K562 (cell line): ENCODE measurements at regions of chr7 and their contacts with region 1.

Region 1: DNA sequence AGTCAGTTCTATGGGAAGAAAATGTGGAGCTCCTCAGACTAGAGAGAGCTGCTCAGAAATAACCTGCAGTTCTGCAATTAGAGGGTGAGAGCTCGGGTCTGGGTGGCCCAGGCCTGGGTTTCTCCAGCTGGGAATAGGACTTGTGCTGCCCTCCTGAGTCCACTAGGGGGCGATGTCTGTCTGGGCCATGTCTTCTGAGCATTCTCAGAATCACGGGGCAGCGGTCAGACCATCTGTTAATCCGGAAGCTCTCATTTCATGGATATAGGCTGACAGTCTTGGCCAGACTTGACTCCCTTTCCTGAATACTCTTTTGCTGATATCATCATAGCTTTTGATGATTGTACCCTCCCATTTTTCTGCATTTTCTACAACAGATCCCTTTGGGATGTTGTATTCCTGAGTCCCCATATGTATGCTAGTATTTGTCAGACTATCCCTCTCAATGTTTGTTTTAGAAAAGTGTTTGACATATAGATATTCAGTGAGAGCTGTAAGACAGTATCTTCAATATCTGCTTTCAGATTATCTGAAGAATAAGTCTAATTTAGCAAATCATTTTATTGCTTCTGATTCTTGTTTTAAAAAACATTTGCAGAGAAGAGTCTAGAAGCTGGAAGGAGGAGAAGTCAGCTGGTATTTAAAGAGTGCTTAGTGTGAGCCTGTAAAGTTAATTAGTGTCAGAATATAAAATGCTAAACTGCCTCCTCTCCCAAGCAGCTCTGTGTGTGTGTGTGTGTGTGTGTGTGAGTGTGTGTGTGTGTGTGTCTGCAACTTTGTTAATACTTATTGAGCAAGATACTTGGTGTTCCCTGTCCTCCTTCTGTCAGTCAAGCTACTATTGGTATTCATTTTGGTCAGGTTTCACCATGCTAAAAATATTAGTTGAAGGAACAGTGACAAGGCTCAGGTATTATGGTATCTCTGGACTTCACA is 38.0 kb downstream of the STARD3NL start:
- DNase-seq: peak; percentile 81 to 86 (median 83)
- ATAC-seq: peak; percentile 99
- H3K4me3 ChIP-seq: no peak overlapping the region
- H3K27ac ChIP-seq: no peak overlapping the region
- H3K4me1 ChIP-seq: no peaks in the 10 kb centered on the region
- H3K27me3 ChIP-seq: no peaks in the 10 kb centered on the region
- CTCF ChIP-seq: peak; percentile 94 to 96 (median 96)
- EP300 ChIP-seq: no peak
- POLR2A ChIP-seq: no peak
- RAD21 ChIP-seq: peak; percentile 90 to 91

Region 2: GRCh38 chr7:37759526-37759925 is 456.5 kb before region 1 on chr7:
- CTCF ChIA-PET with region 1: no interaction called
- POLR2A ChIA-PET with region 1: no interaction called
- in situ Hi-C with region 1: no loop called
- intact Hi-C with region 1: no loop called
- DNase-seq: no peak
- ATAC-seq: no peak
- H3K4me3 ChIP-seq: no peak overlapping the region
- H3K27ac ChIP-seq: no peak overlapping the region
- H3K4me1 ChIP-seq: no peaks in the 10 kb centered on the region; a peak in 1 of 5 replicates
- H3K27me3 ChIP-seq: no peaks in the 10 kb centered on the region
- CTCF ChIP-seq: no peak
- EP300 ChIP-seq: no peak
- POLR2A ChIP-seq: no peak
- RAD21 ChIP-seq: no peak

Region 3: GRCh38 chr7:37796138-37796775 is 419.7 kb before region 1 on chr7:
- CTCF ChIA-PET with region 1: no interaction called
- POLR2A ChIA-PET with region 1: no interaction called
- in situ Hi-C with region 1: no loop called
- intact Hi-C with region 1: no loop called
- DNase-seq: no peak
- ATAC-seq: no peak
- H3K4me3 ChIP-seq: no peak overlapping the region
- H3K27ac ChIP-seq: no peak overlapping the region
- H3K4me1 ChIP-seq: no peaks in the 10 kb centered on the region
- H3K27me3 ChIP-seq: no peaks in the 10 kb centered on the region
- CTCF ChIP-seq: no peak
- EP300 ChIP-seq: no peak
- POLR2A ChIP-seq: no peak
- RAD21 ChIP-seq: no peak

Region 4: DNA sequence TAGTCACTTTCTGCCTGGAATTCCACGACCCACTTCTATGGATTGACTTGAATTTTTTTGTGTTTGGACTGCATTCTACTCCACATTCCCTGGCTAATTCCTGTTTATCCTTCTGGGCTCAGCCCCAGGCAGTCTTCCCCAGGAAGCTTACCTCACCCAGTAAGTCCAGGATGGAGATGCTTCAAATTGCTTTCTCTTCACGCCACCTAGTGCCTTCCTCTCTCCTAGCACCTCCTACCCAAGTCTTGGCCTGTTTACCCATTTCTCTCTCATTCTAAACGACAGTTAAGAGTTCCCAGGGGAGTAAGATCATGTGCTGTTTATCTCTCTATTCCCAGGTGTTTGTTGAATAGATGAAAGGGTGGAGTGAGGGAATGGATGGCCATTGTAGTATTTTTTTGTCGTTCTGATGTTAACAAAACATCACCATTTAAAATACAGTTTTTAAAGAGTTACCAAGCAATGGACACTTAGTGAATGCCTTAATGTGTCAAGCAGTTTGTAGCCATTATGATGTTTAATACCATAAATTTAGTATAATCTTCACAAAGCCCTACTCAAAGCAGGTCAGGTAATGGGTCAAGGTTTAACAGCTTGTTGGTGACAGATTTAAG is 102.9 kb after region 1 on chr7:
- CTCF ChIA-PET with region 1: interaction called, 5 read pairs
- POLR2A ChIA-PET with region 1: interaction called, 4 read pairs
- in situ Hi-C with region 1: no loop called
- intact Hi-C with region 1: loop called (anchors 2 kb)
- DNase-seq: peak in 3 of 4 experiments; percentile 30 to 66 (median 55)
- ATAC-seq: peak; percentile 92
- H3K4me3 ChIP-seq: no peak overlapping the region
- H3K27ac ChIP-seq: no peak overlapping the region
- H3K4me1 ChIP-seq: no peaks in the 10 kb centered on the region; a peak in 1 of 5 replicates
- H3K27me3 ChIP-seq: 0 out of 5 replicates have a peak, but pooled peaks cover 0 to 5% of the 10 kb centered on the region in 2 experiments
- CTCF ChIP-seq: peak; percentile 59 to 82 (median 63)
- EP300 ChIP-seq: no peak
- POLR2A ChIP-seq: no peak
- RAD21 ChIP-seq: peak; percentile 79 to 91

Region 5: DNA sequence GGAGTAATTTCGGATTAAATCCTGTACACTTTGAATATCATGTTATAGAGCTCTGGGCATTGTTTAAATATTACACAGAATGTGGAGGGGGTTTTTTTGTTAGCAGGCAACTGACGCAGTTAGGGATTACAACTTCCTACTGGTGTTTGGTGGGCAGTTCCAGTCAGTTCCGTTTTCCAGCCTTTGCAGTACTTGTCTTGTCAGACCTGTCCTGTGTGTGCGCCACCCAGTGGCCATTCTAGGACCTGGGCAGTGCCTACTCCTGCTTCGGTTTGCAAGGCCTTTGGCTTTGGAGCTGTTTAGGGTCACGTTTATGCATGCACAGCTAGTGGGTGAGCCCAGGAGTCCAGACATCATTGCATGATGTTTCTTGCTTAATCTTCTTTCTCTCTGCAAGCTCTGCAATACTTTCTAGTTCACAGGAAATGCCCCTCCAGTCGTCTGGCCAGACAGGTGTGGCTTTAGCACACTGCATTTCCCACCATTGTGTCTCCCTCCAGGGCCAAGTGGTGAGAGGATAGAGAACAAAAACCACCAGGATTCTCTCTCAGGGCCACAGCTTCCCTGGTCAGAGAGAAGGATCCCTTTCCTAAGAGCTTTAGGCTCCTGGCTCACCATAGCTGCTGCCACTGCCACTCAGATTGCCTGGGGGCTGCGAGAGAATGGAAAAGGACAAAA is 154.0 kb after region 1 on chr7:
- CTCF ChIA-PET with region 1: interaction called, 3 read pairs
- POLR2A ChIA-PET with region 1: no interaction called
- in situ Hi-C with region 1: no loop called
- intact Hi-C with region 1: loop called (anchors 5 kb)
- DNase-seq: peak; percentile 54 to 83 (median 64)
- ATAC-seq: peak; percentile 97
- H3K4me3 ChIP-seq: no peak overlapping the region
- H3K27ac ChIP-seq: no peak overlapping the region
- H3K4me1 ChIP-seq: no peaks in the 10 kb centered on the region
- H3K27me3 ChIP-seq: no peaks in the 10 kb centered on the region
- CTCF ChIP-seq: peak; percentile 76 to 89 (median 83)
- EP300 ChIP-seq: no peak
- POLR2A ChIP-seq: no peak
- RAD21 ChIP-seq: no peak; a peak in 1 of 4 replicates